Common myeloid progenitor, CD34-positive (primary cell): ENCODE measurements at regions of chr13 and their contacts with region 1.

Region 1: GRCh38 chr13:62544928-62545327 is 1129.3 kb upstream of the PCDH20 start:
- DNase-seq: peak in 2 of 3 donors; percentile 3 to 9
- H3K4me3 ChIP-seq: no peak overlapping the region
- H3K27ac ChIP-seq: no peak overlapping the region
- H3K4me1 ChIP-seq: no peaks in the 10 kb centered on the region
- H3K27me3 ChIP-seq: peaks cover 0 to 2% (median 0%) of the 10 kb centered on the region in 5 experiments

Region 2: DNA sequence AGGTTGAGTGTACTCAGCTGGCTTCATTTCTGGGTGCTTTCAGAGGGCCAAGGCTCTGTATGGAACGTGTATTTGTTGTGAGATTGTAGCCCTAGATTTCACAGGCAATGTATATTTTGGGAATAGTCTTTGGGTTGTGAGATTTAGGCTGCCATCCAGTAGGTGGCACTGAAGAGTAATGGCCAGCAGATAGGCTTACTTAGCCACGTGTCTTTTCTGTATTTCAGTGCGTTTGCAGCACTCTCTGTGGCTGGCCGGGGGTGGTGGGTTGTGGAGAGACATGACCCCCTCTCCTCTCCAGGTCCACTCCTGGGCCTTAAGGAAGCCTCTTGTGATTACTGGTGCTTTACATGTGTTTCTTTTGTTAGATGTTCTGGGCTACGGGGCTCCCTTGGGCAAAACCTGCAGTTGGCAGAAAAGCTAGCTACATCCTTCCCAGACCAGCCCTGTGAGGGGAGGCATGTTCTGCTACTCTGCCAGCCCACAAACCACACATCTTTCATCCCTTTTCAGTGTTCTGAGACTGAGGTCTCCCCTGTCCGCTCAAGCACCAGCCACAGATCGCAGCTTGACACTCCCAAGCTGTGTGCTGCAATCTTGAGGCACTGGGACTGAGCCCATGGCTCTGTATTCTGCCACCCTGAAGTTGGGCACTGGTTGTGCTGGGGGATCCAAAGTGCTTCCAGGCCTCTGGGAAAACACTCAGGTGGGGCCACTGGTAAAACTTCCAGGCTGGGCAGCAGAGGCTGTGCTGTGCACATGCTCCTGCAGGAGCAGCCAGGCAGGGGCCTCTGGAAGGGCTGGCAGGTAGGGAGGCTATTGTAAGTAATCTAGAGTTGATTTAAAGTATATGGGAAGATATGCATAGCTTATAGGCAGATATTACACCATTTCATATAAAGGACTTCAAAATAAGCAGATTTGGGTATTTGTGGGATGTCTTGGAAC is 32.5 kb before region 1 on chr13:
- CTCF ChIA-PET with region 1: interaction called, 10 read pairs
- POLR2A ChIA-PET with region 1: no interaction called
- DNase-seq: peak; percentile 58 to 87 (median 80)
- H3K4me3 ChIP-seq: peak overlapping the region in 4 of 7 experiments; percentile 38 to 70 (median 53)
- H3K27ac ChIP-seq: no peak overlapping the region
- H3K4me1 ChIP-seq: peaks cover 0 to 10% (median 4%) of the 10 kb centered on the region in 4 experiments
- H3K27me3 ChIP-seq: no peaks in the 10 kb centered on the region

Region 3: GRCh38 chr13:62556978-62557377 is 12.1 kb after region 1 on chr13:
- CTCF ChIA-PET with region 1: no interaction called
- POLR2A ChIA-PET with region 1: no interaction called
- DNase-seq: no peak
- H3K4me3 ChIP-seq: no peak overlapping the region
- H3K27ac ChIP-seq: no peak overlapping the region
- H3K4me1 ChIP-seq: no peaks in the 10 kb centered on the region
- H3K27me3 ChIP-seq: no peaks in the 10 kb centered on the region

Region 4: GRCh38 chr13:62653371-62653770 is 108.4 kb after region 1 on chr13:
- CTCF ChIA-PET with region 1: no interaction called
- POLR2A ChIA-PET with region 1: no interaction called
- DNase-seq: no peak
- H3K4me3 ChIP-seq: no peak overlapping the region
- H3K27ac ChIP-seq: no peak overlapping the region
- H3K4me1 ChIP-seq: no peaks in the 10 kb centered on the region
- H3K27me3 ChIP-seq: no peaks in the 10 kb centered on the region